ENCODE measurements at regions of chr16 and their contacts with region 1.

Region 1: DNA sequence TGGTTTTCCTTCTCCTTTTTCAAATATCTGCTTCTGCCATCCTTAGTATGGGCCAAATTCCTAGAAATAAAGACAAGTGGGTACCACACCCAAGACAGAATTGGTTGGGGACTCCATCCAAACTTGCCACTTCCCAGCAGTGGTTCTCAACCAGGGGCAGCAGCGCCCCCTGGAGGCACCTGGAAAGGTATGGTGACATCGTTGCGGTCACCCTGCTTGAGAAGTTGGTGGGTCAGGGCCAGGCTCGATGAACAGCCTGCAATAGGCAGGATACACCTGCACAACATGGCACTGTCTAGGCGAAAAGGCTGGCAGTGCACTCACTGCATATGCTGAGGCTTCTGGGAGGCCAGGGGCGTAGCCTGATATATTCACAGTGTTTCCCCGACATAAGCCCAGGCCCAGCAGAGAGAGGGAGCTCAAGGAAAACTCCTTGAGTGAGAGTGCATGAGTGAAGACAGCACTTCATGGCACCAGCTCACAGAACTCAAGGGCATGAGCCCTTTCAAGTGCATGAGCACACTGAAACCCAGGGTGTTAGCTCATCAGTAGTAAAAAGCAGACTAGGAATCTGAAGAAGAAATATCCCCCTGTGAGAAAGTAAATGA is 57.7 kb downstream of the CMC2 start:
- DNase-seq: peak in 7 of 10 donors; percentile 31 to 71 (median 68)
- H3K4me3 ChIP-seq: peak overlapping the region in 15 of 59 donors; percentile 0 to 53 (median 24)
- H3K27ac ChIP-seq: peak overlapping the region in 3 of 59 donors; percentile 36 to 72 (median 63)
- H3K27me3 ChIP-seq: peaks cover 0 to 11% (median 0%) of the 10 kb centered on the region in 45 donors
- CTCF ChIP-seq: peak; percentile 28 to 84 (median 67)

Region 2: DNA sequence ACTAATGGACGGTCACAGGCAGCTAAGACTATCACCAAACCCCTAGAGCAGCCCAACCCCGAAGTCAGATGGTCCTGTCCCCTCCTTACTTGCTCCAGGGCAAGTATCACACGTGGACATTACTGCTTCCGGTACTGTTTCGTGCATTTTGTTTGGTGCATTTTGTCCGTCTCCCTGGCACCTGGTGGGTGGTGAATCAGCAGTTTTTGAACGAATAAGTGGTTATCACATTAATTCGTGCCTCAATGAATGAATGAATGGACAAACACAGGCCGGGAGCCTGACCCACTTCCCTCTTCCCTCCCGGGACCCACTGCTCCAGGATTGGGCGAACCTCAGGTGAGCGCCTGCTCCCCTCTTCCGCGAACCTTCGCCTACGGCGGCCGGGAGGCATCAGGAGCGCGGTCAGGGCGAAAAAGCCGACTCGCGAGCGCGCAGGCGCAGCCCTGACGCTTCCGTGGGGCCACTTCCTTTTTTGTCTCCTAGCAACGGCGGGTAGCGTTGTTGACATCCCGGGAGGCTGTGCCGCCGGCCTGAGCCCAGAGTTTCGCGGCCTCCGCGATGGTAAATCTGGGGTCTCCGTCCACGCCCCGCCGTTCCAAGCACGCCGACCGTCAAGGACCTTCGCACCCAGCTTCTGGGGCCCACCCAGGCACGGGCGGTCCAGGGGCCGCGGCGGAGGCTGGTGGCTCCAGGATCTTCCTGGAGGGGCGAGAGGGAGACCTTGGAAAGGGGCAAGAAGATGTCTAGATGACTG is 408.3 kb before region 1 on chr16 and contains the start of gene DYNLRB2:
- intact Hi-C with region 1: loop called in 1 of 2 experiments (anchors 2 kb)
- DNase-seq: peak; percentile 82 to 96 (median 92)
- H3K4me3 ChIP-seq: peak within 1 kb of the TSS; percentile 62 to 99 (median 82)
- H3K27ac ChIP-seq: peak within 1 kb of the TSS in 55 of 59 donors; percentile 6 to 94 (median 76)
- H3K27me3 ChIP-seq: peaks cover 0 to 21% (median 3%) of the 10 kb centered on the region in 45 donors
- CTCF ChIP-seq: peak in 31 of 56 donors; percentile 6 to 61 (median 28)
- total RNA-seq, gene DYNLRB2: 0.88 to 11.8 (median 3.8) TPM in 112 of 120 experiments, not detected in the others

Region 3: GRCh38 chr16:80924372-80924978 is 24.5 kb before region 1 on chr16:
- intact Hi-C with region 1: loop called in 1 of 2 experiments (anchors 2 kb)
- DNase-seq: peak in 6 of 10 donors; percentile 24 to 58 (median 50)
- H3K4me3 ChIP-seq: no peak overlapping the region
- H3K27ac ChIP-seq: no peak overlapping the region
- H3K27me3 ChIP-seq: no peaks in the 10 kb centered on the region
- CTCF ChIP-seq: peak in 53 of 56 donors; percentile 21 to 75 (median 47)

Region 4: GRCh38 chr16:80993307-80993706 is 44.3 kb after region 1 on chr16:
- intact Hi-C with region 1: loop called in 1 of 2 experiments (anchors 5 kb)
- DNase-seq: no peak
- H3K4me3 ChIP-seq: peak overlapping the region in 33 of 59 donors; percentile 0 to 53 (median 25)
- H3K27ac ChIP-seq: peak overlapping the region in 45 of 59 donors; percentile 3 to 85 (median 61)
- H3K27me3 ChIP-seq: no peaks in the 10 kb centered on the region
- CTCF ChIP-seq: peak in 1 of 56 donors; percentile 18

Region 5: GRCh38 chr16:82329485-82330180 is 1380.6 kb after region 1 on chr16:
- intact Hi-C with region 1: no loop called
- DNase-seq: peak in 1 of 10 donors; percentile 46
- H3K4me3 ChIP-seq: no peak overlapping the region
- H3K27ac ChIP-seq: no peak overlapping the region
- H3K27me3 ChIP-seq: peaks cover 0 to 4% (median 0%) of the 10 kb centered on the region in 45 donors
- CTCF ChIP-seq: no peak